Common myeloid progenitor, CD34-positive (primary cell): ENCODE measurements at regions of chr2 and their contacts with region 1.

Region 1: DNA sequence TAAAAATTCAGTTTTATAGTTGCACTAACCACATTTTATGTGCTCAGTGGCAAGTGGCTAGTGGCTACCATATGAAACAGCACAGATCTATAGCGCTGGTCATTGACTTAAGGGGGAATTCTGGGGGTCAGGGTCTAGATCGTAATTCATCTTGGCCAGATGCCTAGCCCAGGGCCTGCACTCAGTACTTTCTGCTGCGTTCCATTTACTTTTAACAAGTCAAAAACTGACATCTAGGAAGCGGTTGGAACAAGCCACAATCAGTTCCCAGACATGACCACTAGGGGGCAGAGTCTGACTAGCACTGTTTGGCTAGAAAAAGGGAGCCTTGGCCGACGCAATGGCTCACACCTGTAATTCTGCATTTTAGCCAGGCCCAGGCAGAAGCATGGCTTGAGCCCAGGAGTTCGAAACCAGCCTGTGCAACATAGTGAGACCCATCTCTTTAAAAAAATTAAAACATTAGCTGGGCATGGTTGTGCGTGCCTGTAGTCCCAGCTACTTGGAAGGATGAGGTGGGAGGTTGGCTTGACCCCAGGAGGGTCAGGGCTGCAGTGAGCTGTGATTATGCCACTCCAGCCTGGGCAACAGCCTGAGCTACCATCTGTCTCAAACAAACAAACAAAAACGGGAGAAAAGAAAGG is 9.0 kb upstream of the TMBIM1 start:
- DNase-seq: peak; percentile 91 to 96 (median 93)
- H3K4me3 ChIP-seq: no peak overlapping the region
- H3K27ac ChIP-seq: peak overlapping the region in 1 of 2 experiments; percentile 65
- H3K4me1 ChIP-seq: peaks cover 0 to 10% (median 3%) of the 10 kb centered on the region in 4 experiments
- H3K27me3 ChIP-seq: no peaks in the 10 kb centered on the region

Region 2: DNA sequence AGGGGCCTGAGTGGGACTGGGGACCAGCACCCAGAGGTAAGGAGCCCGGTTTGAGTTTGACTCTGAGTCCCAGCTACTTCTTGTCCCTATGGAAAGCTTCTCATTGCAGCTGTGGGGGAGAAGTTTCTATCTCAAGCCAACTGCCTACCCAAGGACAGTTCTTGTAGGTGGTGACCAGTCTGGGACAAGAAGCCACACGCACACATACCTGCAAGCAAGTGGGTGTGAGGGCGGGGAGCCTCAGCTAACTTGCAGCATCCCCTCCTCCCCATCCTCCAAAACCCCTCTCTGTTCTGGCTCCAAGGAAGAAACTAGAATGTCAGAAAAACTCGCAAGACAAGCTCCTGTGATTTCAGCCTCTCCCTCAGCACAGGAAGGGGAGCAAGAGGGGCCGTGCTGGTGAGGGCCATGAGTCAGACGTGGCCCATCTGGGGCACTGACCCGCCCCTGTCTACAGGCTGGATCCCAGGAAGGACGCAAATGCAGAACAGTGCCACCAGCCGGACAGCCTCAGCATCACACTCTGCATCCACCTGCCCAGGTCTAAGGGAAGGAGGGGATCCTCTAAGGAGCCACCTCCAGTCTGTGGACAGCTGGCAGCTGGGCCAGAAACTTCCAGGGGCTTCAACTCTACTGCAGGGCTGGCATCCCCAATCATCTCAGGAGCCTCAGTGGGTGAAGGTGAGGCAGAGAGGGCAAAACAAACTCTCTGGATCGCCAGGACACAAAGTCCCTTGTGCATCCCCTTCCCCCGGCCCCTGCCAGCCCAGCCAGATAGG is 401.9 kb before region 1 on chr2:
- CTCF ChIA-PET with region 1: no interaction called
- POLR2A ChIA-PET with region 1: no interaction called
- DNase-seq: peak in 1 of 3 donors; percentile 31
- H3K4me3 ChIP-seq: no peak overlapping the region
- H3K27ac ChIP-seq: no peak overlapping the region
- H3K4me1 ChIP-seq: peaks cover 8 to 38% (median 34%) of the 10 kb centered on the region in 4 experiments
- H3K27me3 ChIP-seq: no peaks in the 10 kb centered on the region

Region 3: DNA sequence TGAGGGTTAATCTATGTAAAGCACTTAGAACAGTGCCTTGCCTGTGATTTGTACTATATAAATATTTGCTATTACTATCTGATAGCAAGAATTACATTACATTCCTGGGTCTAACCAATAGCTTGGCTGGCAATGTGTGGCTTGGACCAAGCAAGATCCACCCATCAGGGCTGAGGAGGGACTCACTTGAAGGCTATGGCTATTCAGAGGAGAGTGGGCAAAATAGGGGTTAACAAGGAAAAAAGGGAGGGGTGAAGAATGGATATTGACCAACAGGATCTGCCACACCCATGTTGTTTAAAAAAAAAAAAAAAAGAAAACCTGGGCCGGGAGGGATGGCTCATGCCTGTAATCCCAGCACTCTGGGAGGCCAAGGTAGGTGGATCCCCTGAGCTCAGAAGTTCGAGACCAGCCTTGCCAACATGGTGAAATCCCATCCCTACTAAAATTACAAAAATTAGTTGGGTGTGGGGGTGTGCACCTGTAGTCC is 11.0 kb after region 1 on chr2:
- CTCF ChIA-PET with region 1: interaction called, 14 read pairs
- POLR2A ChIA-PET with region 1: interaction called, 4 read pairs
- DNase-seq: no peak
- H3K4me3 ChIP-seq: no peak overlapping the region
- H3K27ac ChIP-seq: no peak overlapping the region
- H3K4me1 ChIP-seq: peaks cover 14 to 47% (median 28%) of the 10 kb centered on the region in 4 experiments
- H3K27me3 ChIP-seq: no peaks in the 10 kb centered on the region

Region 4: DNA sequence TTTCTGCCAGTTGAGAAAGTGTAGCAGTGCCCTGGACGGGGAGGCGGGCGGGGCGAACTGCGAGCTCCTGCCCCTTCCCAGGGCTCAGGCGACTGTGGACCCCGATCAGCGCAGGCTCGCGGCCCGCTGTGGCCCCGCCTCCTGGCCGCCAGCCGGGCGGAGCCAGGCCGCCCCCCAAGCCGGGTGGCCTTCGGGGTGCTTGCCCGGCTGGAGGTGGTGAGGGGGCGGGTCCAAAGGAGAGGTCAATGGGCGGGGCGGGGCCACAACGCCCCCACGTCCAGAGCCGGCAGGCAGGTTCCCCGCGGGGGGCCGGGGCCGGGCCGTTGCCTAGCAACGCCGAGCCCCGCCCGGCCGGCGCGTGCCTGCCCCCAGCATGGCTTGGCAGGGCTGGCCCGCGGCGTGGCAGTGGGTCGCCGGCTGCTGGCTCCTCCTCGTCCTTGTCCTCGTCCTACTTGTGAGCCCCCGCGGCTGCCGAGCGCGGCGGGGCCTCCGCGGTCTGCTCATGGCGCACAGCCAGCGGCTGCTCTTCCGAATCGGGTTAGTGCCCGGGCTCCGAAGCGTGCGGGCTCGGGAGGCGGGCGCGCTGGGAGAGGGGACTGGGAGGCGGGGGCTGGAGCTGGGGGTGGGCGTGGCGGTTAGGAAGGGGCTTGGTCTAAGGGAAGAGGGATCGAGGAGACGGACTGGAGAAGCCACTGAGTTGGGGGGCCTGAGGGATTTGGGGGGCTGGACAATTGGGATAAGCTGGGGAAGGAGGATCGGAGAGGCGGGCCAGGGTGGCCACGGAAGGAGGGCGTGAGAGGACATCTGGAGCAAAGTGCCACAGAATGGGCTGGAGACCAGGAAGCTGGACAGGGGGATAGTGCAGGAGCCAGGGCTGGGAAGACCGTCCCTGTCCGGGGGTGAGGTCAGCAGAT is 21.9 kb after region 1 on chr2:
- CTCF ChIA-PET with region 1: interaction called, 340 read pairs
- POLR2A ChIA-PET with region 1: interaction called, 7 read pairs
- DNase-seq: peak; percentile 86 to 93 (median 89)
- H3K4me3 ChIP-seq: peak overlapping the region; percentile 45 to 97 (median 86)
- H3K27ac ChIP-seq: peak overlapping the region; percentile 64 to 84
- H3K4me1 ChIP-seq: peaks cover 7 to 84% (median 76%) of the 10 kb centered on the region in 4 experiments
- H3K27me3 ChIP-seq: no peaks in the 10 kb centered on the region

Region 5: DNA sequence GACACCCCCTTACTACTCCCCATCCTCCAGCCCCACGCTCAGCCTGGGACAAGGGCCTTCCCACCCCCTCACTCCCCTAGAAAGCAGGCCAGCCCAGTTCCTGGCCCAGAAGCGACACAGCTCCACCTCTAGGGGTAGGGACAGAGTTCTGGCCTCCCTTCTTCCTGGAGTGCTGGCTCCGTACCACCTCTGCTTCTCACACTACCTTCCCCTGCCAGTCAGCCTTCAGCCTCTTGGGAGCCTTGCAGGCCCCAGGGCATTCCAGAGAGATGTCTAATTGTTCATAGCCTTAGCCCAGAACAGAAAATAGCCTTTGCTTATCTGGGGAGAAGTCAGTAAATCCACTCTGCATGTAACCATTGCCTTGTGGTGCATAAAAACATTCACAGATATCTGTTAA is 42.3 kb after region 1 on chr2:
- CTCF ChIA-PET with region 1: interaction called, 340 read pairs
- POLR2A ChIA-PET with region 1: no interaction called
- DNase-seq: no peak
- H3K4me3 ChIP-seq: no peak overlapping the region
- H3K27ac ChIP-seq: no peak overlapping the region
- H3K4me1 ChIP-seq: no peaks in the 10 kb centered on the region
- H3K27me3 ChIP-seq: no peaks in the 10 kb centered on the region

Region 6: GRCh38 chr2:218367415-218368153 is 66.3 kb after region 1 on chr2:
- CTCF ChIA-PET with region 1: interaction called, 451 read pairs
- POLR2A ChIA-PET with region 1: no interaction called
- DNase-seq: peak; percentile 87 to 95 (median 92)
- H3K4me3 ChIP-seq: peak overlapping the region; percentile 45 to 84 (median 63)
- H3K27ac ChIP-seq: peak overlapping the region; percentile 81 to 93
- H3K4me1 ChIP-seq: peaks cover 14 to 48% (median 28%) of the 10 kb centered on the region in 4 experiments
- H3K27me3 ChIP-seq: no peaks in the 10 kb centered on the region

Region 7: DNA sequence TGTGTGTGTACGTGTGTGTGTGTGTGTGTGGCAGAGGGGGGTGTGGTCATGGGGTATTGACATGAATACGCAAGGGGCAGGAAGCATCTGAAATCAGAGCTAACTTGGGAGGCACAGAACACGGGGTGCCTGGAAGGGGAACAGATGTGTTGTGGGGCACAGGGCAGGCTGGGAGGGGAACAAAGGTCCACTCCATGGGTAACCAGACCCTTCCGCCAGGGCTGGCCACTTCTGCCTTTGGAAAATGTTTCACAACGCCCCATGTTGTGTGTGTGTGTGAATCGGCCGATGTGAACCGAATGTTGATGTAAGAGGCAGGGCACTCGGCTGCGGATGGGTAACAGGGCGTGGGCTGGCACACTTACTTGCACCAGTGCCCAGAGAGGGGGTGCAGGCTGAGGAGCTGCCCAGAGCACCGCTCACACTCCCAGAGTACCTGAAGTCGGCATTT is 80.6 kb after region 1 on chr2 and contains the start of gene SLC11A1:
- CTCF ChIA-PET with region 1: interaction called, 15 read pairs
- POLR2A ChIA-PET with region 1: no interaction called
- DNase-seq: no peak
- H3K4me3 ChIP-seq: peak within 1 kb of the TSS in 1 of 7 experiments; percentile 51
- H3K27ac ChIP-seq: no peak within 1 kb of the TSS
- H3K4me1 ChIP-seq: peaks cover 0 to 4% (median 1%) of the 10 kb centered on the region in 4 experiments
- H3K27me3 ChIP-seq: no peaks in the 10 kb centered on the region